Psoas muscle (tissue), 8 donors: ENCODE measurements at regions of chr12 and their contacts with region 1.

Region 1: GRCh38 chr12:123580772-123581171 is 3.6 kb upstream of the TMED2 start:
- DNase-seq: no peak
- ATAC-seq: no peak
- H3K4me3 ChIP-seq: no peak overlapping the region
- H3K27ac ChIP-seq: peak overlapping the region; percentile 85
- H3K4me1 ChIP-seq: peaks cover 21% of the 10 kb centered on the region
- H3K27me3 ChIP-seq: no peaks in the 10 kb centered on the region
- CTCF ChIP-seq: no peak

Region 2: DNA sequence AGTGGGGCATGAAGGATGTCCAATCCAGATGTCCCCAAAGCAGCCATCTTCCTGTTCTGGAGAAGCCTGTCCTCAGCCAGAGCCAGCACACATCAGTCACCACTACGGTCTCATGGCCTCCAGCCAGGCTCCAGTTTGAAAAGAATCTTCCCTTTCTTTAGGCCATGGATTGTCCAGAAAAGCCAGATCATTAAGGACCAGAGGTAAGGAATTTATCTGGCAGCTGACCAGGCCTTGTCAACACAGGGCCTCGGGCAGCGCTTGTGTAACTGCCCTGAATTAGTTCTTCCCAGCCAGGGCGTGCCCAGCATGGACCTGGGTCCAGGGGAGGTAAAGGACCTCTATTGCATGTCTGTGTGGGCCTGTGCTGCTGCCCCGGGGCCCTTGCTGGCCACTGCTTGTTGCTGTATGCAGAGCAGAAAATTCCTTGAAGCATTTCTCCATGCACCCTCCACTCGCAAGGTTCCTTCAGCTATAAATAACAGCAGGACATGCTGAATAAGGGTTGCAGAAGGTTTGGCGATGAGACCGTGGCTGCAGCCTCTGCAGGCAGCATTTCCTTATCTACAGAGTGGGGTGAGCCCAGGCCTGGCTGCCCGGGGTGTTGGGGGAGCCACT is 663.2 kb before region 1 on chr12:
- intact Hi-C with region 1: no loop called
- DNase-seq: peak in 1 of 2 donors; percentile 33
- ATAC-seq: peak; percentile 71 to 89 (median 85)
- H3K4me3 ChIP-seq: peak overlapping the region; percentile 38
- H3K27ac ChIP-seq: peak overlapping the region; percentile 76
- H3K4me1 ChIP-seq: peaks cover 30% of the 10 kb centered on the region
- H3K27me3 ChIP-seq: no peaks in the 10 kb centered on the region
- CTCF ChIP-seq: no peak

Region 3: GRCh38 chr12:123271001-123271729 is 309.6 kb before region 1 on chr12:
- intact Hi-C with region 1: loop called in 1 of 2 experiments (anchors 5 kb)
- DNase-seq: peak; percentile 82 to 89
- ATAC-seq: peak; percentile 63 to 84 (median 79)
- H3K4me3 ChIP-seq: peak overlapping the region; percentile 62
- H3K27ac ChIP-seq: peak overlapping the region; percentile 69
- H3K4me1 ChIP-seq: peaks cover 27% of the 10 kb centered on the region
- H3K27me3 ChIP-seq: no peaks in the 10 kb centered on the region
- CTCF ChIP-seq: peak; percentile 73

Region 4: GRCh38 chr12:123457980-123458783 is 122.6 kb before region 1 on chr12 and contains the start of gene SNRNP35:
- intact Hi-C with region 1: loop called in 1 of 2 experiments (anchors 5 kb)
- DNase-seq: peak; percentile 86 to 90
- ATAC-seq: peak; percentile 67 to 84 (median 76)
- H3K4me3 ChIP-seq: peak within 1 kb of the TSS; percentile 96
- H3K27ac ChIP-seq: peak within 1 kb of the TSS; percentile 99
- H3K4me1 ChIP-seq: peaks cover 12% of the 10 kb centered on the region
- H3K27me3 ChIP-seq: no peaks in the 10 kb centered on the region
- CTCF ChIP-seq: no peak
- total RNA-seq, gene SNRNP35: 19.8 to 35.1 (median 25.5) TPM

Region 5: DNA sequence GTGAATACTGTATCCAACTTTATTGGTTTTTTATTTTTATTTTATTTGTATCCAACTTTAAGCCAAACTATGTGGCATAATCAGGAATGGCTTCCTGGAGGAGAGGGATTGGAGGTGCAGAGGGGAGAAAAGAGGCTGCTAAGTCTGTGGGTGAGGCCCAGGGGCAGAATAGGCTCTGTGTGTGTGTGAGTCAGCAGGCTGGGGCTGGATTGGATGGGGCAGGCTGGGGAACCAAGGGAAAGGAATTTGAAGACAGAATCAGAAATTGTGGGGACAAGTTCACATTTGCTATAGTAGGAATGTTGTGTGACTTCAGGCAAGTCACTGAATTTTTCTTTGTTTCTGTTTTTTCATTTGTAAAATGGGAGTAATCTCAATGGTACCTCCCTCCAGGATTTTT is 34.5 kb before region 1 on chr12:
- intact Hi-C with region 1: no loop called
- DNase-seq: no peak
- ATAC-seq: no peak
- H3K4me3 ChIP-seq: no peak overlapping the region
- H3K27ac ChIP-seq: no peak overlapping the region
- H3K4me1 ChIP-seq: no peaks in the 10 kb centered on the region
- H3K27me3 ChIP-seq: peaks cover 0 to 3% (median 0%) of the 10 kb centered on the region in 3 donors
- CTCF ChIP-seq: no peak